ENCODE measurements at regions of chr9 and their contacts with region 1.

Region 1: DNA sequence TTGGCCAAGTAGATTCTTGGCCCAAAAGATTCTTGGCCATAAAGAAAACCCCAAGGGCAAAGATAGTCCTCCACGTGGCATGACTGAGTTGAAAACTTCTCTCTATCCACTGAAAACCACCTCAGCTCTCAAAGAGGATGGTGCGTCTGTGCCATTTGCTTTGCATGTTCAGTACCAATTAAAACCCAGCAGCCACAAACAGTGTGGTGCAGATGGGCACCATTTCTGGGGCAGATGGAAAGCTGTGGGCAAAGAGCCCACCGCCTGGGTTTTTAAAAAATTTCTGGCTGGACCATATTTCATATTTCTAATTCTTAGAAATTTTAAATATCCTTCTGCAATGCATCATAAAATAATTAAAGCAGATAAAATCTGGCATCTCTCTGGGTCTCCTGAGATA is 84.5 kb upstream of the PUM3 start:
- DNase-seq: no peak
- H3K4me3 ChIP-seq: no peak overlapping the region
- CTCF ChIP-seq: no peak
- POLR2A ChIP-seq: no peak

Region 2: DNA sequence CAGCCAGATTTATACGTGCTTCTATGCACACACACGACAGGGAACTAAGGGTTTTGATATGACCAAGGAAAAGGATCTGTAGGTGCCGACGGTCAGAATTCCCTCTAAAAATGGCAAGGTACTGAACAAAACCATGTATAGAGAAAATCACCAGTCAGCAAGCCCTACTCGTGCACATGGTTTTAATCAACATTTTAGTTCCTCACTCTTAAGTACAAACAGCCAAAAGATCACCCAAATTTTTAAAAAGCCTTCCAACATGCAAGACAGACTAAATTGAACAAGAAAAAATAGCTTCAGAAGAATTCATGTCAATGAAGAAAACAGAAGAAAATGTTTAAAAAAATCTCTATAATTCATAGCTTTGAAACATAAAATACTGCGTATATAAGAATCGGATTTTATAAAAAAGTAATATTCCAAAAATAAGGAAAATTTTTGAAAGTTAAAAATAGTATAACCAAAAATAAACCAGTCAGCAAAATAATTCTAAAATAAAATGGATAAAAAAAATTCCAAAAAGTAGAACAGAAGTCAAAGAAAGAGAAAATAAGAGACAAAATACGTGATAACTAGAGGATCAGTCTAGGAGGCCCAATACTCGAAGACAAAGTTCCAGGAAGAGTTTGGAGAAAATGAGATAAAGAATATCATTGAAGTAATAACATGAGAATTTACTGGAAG is 254.1 kb before region 1 on chr9:
- intact Hi-C with region 1: no loop called
- DNase-seq: no peak
- H3K4me3 ChIP-seq: no peak overlapping the region
- CTCF ChIP-seq: no peak
- POLR2A ChIP-seq: no peak

Region 3: DNA sequence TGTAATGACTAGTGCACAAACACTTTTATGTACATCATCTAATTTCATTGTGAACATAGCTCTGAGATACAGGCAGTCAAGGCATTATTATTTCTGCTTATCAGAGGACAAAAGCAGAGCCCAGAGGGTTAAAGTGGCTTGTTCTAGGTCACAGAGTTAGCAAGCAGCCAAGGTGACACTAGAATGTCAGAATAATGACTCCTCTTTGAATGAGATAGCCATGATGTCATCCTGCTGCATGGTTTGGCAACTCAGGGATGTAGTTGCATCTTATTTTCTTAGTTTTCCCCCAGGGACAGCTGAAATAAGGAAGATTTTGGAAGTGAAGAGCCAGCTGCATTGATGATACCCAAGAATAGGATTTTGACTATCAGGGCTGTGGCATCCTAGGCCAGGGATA is 156.7 kb before region 1 on chr9:
- intact Hi-C with region 1: no loop called
- DNase-seq: no peak
- H3K4me3 ChIP-seq: no peak overlapping the region
- CTCF ChIP-seq: no peak
- POLR2A ChIP-seq: no peak

Region 4: GRCh38 chr9:2984491-2984890 is 56.1 kb after region 1 on chr9:
- intact Hi-C with region 1: no loop called
- DNase-seq: no peak
- H3K4me3 ChIP-seq: no peak overlapping the region
- CTCF ChIP-seq: no peak
- POLR2A ChIP-seq: no peak

Region 5: GRCh38 chr9:3308609-3309008 is 380.2 kb after region 1 on chr9:
- intact Hi-C with region 1: loop called (anchors 5 kb)
- DNase-seq: no peak
- H3K4me3 ChIP-seq: no peak overlapping the region
- CTCF ChIP-seq: no peak
- POLR2A ChIP-seq: no peak